Breast epithelium (tissue), 4 donors: ENCODE measurements at regions of chr1 and their contacts with region 1.

Region 1: DNA sequence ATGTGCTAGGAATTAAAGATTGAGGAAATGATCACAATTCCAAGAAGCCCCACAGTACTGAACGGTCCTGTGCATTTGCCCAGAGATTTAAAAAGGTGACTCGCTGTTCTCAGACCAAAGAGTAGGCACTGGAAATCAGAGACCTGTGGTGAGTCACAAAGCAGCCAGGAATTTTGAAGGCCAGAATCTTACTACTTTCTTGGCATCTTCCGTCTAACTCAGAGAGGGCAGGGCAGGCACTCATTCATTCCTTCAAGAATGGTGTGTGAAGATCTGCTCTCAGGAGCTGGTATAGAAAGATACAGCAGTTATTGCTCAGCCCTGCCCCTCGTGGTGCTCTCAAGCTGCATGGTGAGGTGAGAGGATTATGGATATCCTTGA is 57.9 kb downstream of the BRINP2 start:
- DNase-seq: no peak
- H3K4me3 ChIP-seq: no peak overlapping the region
- H3K27ac ChIP-seq: no peak overlapping the region
- H3K4me1 ChIP-seq: no peaks in the 10 kb centered on the region
- H3K27me3 ChIP-seq: no peaks in the 10 kb centered on the region
- CTCF ChIP-seq: no peak
- POLR2A ChIP-seq: no peak

Region 2: DNA sequence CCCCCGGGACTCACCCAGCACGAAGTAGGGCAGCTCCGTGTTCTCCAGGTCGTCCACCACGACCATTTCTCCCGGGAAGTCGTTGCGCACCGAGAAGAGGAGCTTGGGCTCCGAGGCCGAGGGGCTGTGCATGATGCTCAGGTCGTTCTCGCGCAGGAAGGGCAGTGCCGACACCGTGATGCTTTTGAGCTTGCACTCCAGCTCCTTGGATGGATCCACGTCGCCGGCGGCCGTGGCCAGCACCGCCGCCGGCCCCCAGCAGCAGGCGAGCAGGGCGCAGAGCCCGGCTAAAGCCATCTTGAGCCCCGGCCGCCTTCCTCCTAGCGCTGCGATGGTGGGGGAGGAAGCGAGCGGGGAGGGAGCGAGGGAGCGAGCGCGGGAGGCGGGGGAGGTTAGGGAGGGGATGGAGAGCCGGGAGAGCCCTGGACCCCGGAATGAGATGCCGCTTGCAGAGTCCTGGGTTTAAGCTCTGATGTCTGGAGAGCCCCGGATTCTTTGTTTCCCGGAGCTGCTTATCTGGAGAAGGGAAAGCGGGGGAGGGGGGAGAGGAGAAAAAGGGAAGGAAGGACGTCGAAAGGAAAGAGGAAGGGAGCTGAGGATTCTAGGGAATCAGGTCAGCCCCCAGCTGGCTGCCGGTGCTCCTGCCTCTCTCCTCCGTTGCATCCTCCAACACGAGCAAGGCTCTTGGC is 64.2 kb before region 1 on chr1 and contains the start of gene ASTN1:
- intact Hi-C with region 1: loop called (anchors 2 kb)
- DNase-seq: no peak
- H3K4me3 ChIP-seq: peak within 1 kb of the TSS; percentile 17 to 72 (median 53)
- H3K27ac ChIP-seq: no peak within 1 kb of the TSS
- H3K4me1 ChIP-seq: peaks cover 0 to 7% of the 10 kb centered on the region in 2 donors
- H3K27me3 ChIP-seq: peaks cover 3 to 28% of the 10 kb centered on the region in 2 donors
- CTCF ChIP-seq: no peak
- POLR2A ChIP-seq: no peak
- total RNA-seq, gene ASTN1: 0.16 to 1.5 (median 0.33) TPM